H1 (cell line): ENCODE measurements at regions of chr19 and their contacts with region 1.

Region 1: DNA sequence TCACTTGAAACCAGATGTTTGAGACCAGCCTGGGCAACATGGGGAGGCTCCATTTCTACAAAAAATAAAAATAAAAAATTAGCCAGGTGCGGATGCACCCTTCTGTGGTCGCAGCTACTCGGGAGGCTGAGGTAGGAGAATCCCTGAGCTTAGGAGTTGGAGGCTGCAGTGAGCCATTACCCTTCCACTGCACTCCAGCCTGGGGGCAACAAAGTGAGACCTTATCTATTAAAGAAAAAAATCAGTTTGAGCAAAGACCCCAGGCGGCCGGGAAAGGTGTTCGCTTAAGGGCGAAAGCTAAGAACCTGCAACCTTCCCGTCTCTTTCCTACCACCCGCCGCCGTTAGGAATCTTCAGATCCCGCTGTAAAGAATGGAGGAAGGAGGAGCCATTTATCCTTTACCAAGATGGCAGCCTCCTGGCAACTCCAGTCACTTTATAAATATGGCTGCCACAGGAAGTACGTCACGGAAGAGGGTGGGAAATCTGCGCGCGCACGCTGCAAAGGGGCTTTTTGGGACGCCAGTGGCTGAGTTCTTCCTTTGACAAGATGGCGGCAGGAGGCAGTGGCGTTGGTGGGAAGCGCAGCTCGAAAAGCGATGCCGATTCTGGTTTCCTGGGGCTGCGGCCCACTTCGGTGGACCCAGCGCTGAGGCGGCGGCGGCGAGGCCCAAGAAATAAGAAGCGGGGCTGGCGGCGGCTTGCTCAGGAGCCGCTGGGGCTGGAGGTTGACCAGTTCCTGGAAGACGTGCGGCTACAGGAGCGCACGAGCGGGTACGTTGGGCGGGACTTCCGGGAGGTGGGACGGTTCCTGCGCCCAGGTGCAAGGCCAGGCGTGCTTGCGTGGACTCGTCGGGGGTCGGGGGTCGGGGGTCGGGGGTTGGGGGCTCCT is at the start of gene NOP53:
- DNase-seq: peak; percentile 96 to 98
- H3K4me3 ChIP-seq: peak within 1 kb of the TSS; percentile 66 to 92 (median 80)
- H3K27ac ChIP-seq: peak within 1 kb of the TSS; percentile 97
- H3K4me1 ChIP-seq: peaks cover 0 to 15% (median 4%) of the 10 kb centered on the region in 4 experiments; a peak in 4 of 7 replicates
- H3K27me3 ChIP-seq: no peaks in the 10 kb centered on the region
- CTCF ChIP-seq: no peak
- EP300 ChIP-seq: 0 out of 3 replicates have a peak, but pooled peaks of 1 of the 2 experiments have one; percentile 20
- POLR2A ChIP-seq: peak; percentile 94 to 97
- RAD21 ChIP-seq: no peak
- total RNA-seq, gene NOP53: 245 and 262 TPM in 2 replicates

Region 2: GRCh38 chr19:47707135-47707925 is 37.9 kb before region 1 on chr19:
- CTCF ChIA-PET with region 1: interaction called, 51 read pairs
- POLR2A ChIA-PET with region 1: interaction called, 15 read pairs
- DNase-seq: peak in 1 of 2 experiments; percentile 94
- H3K4me3 ChIP-seq: no peak overlapping the region
- H3K27ac ChIP-seq: no peak overlapping the region
- H3K4me1 ChIP-seq: no peaks in the 10 kb centered on the region
- H3K27me3 ChIP-seq: no peaks in the 10 kb centered on the region
- CTCF ChIP-seq: peak; percentile 91 to 93 (median 92)
- EP300 ChIP-seq: peak in 1 of 2 experiments; percentile 40; a peak in 1 of 3 replicates
- POLR2A ChIP-seq: no peak
- RAD21 ChIP-seq: peak; percentile 90 to 91

Region 3: DNA sequence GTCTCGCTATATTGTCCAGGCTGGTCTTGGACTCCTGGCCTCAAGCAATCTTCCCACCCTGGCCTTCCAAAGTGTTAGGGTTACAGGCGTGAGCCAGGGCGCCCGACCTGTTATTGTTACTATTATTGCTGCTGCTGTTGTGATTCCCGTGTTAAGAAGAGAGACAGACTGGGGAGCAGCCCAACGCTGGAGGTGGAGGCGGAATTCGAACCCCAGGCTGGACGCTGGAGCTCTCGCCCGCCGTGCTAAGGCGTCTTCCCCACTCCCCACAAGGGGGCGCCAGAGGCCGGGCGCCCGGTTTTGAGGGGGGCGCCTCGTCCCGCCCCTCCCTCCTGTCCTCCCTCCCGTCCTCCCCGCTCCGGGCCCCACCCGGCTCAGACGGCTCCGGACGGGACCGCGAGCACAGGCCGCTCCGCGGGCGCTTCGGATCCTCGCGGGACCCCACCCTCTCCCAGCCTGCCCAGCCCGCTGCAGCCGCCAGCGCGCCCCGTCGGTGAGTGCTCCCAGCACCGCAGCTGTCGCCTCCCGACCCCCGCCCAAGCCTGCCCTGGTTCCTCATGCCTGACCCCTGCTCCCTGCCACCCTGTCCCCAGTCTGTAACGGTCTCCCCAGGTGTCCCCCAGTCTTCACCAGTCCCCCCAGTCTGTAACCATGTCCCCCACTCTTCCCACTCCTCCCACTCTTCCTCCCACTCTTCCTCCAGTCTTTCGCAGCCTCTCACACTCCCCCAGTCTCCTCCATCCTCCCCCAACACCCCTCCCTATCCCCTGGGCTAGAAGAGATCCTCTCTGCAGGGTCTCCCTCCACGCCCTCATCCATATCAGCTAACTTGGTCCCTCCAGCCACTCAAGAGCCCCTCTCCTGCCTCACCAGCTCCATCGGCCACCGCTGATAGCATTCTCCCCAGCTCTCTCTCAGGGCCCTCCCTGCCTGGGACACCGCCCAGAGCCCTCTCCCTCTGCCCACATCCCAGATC is 31.9 kb before region 1 on chr19 and contains the start of gene EHD2:
- CTCF ChIA-PET with region 1: interaction called, 51 read pairs
- POLR2A ChIA-PET with region 1: interaction called, 15 read pairs
- DNase-seq: peak in 1 of 2 experiments; percentile 89
- H3K4me3 ChIP-seq: peak within 1 kb of the TSS; percentile 47 to 66 (median 56)
- H3K27ac ChIP-seq: no peak within 1 kb of the TSS
- H3K4me1 ChIP-seq: no peaks in the 10 kb centered on the region
- H3K27me3 ChIP-seq: no peaks in the 10 kb centered on the region
- CTCF ChIP-seq: peak; percentile 74 to 84 (median 81)
- EP300 ChIP-seq: no peak
- POLR2A ChIP-seq: no peak
- RAD21 ChIP-seq: peak; percentile 77 to 81
- total RNA-seq, gene EHD2: 13.0 and 14.3 TPM in 2 replicates

Region 4: DNA sequence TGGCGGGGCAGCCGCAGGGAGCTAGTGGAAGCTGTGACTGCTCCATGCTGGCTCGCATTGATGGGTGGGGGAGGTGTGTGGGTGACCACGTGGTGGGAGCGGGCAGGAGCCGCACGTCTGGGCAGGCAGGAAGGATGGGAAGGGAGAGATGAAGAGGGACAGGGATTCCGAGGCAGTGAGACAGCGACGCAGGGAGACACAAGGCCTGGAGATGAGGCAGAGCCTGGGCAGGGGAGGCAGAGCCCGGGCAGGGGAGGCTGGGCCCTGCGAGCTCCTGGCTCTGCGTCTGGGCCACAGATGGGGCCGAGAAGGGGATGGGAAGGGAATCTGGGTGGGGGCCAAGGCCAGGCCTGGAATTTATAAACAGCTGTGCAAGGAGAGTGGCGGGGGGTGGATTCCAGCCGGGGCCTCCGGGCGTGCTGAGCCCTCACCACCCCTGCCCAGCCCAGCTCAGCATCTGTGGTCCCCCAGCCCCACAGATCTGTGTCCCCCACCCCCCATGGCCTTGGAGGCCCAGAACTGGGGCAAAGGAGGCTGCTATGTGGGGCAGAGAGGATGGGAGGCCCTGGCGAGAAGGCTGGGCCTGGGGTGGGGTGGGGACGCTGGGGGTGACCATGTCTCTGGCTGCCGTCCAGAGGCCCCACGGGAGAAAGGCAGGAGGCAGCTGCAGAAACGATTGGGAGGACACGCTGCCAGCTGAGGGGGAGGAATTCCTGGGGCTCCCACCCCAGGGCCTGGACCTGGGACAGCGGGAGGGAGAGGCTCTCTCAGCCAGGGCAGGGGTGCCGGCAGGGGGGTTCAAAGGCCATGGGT is 26.0 kb before region 1 on chr19:
- CTCF ChIA-PET with region 1: interaction called, 51 read pairs
- POLR2A ChIA-PET with region 1: interaction called, 10 read pairs
- DNase-seq: no peak
- H3K4me3 ChIP-seq: no peak overlapping the region
- H3K27ac ChIP-seq: peak overlapping the region; percentile 36; the same call in 1 of the 2 replicates
- H3K4me1 ChIP-seq: peaks cover 0 to 4% (median 3%) of the 10 kb centered on the region in 4 experiments; a peak in 4 of 7 replicates
- H3K27me3 ChIP-seq: no peaks in the 10 kb centered on the region
- CTCF ChIP-seq: no peak
- EP300 ChIP-seq: no peak
- POLR2A ChIP-seq: no peak
- RAD21 ChIP-seq: no peak

Region 5: GRCh38 chr19:47729992-47730889 is 15.0 kb before region 1 on chr19:
- CTCF ChIA-PET with region 1: interaction called, 4 read pairs
- POLR2A ChIA-PET with region 1: interaction called, 22 read pairs
- DNase-seq: peak in 1 of 2 experiments; percentile 96
- H3K4me3 ChIP-seq: peak overlapping the region; percentile 41 to 73 (median 62)
- H3K27ac ChIP-seq: no peak overlapping the region; the same call in 1 of the 2 replicates
- H3K4me1 ChIP-seq: peaks cover 0 to 9% (median 5%) of the 10 kb centered on the region in 4 experiments; a peak in 2 of 7 replicates
- H3K27me3 ChIP-seq: no peaks in the 10 kb centered on the region
- CTCF ChIP-seq: no peak
- EP300 ChIP-seq: no peak
- POLR2A ChIP-seq: peak in 1 of 2 experiments; percentile 53; a peak in 1 of 3 replicates
- RAD21 ChIP-seq: no peak

Region 6: DNA sequence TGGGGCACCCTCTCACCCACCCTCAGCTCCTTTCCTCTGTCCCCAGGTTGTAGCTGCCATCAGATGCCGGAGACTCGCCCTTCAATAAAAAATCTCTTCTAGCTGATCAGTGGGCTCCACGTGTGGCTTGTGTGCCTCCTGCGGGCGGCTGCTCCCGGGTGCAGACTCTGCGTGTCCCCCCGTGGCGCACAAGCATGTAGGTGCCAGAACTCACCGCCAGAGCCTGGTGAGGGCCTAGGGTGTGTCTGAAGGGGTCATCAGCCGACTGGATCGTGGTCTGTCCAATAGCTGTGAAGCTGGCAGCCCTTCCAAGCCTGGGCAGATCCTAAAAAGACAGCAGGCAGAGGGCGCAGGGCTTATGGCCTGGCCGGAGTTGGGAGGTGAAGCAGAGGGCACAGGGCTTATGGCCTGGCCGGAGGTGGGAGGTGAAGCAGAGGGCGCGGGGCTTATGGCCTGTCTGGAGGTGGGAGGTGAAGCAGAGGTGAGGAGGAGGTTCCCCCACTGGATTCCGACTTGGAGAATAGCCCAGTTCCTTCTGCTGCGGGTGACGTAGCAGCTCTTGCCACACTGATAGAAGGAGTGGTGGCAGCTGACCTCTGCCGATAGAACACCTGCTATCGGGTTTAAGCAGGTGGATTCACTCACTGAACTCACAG is 11.8 kb after region 1 on chr19:
- CTCF ChIA-PET with region 1: interaction called, 10 read pairs
- POLR2A ChIA-PET with region 1: interaction called, 204 read pairs
- DNase-seq: no peak
- H3K4me3 ChIP-seq: no peak overlapping the region
- H3K27ac ChIP-seq: no peak overlapping the region
- H3K4me1 ChIP-seq: no peaks in the 10 kb centered on the region
- H3K27me3 ChIP-seq: no peaks in the 10 kb centered on the region
- CTCF ChIP-seq: no peak
- EP300 ChIP-seq: no peak
- POLR2A ChIP-seq: peak in 1 of 2 experiments; percentile 37; a peak in 2 of 3 replicates
- RAD21 ChIP-seq: no peak

Region 7: GRCh38 chr19:47765523-47766358 is 20.5 kb after region 1 on chr19:
- CTCF ChIA-PET with region 1: interaction called, 17 read pairs
- POLR2A ChIA-PET with region 1: interaction called, 204 read pairs
- DNase-seq: peak in 1 of 2 experiments; percentile 93
- H3K4me3 ChIP-seq: no peak overlapping the region
- H3K27ac ChIP-seq: no peak overlapping the region; the same call in 1 of the 2 replicates
- H3K4me1 ChIP-seq: peaks cover 0 to 6% (median 3%) of the 10 kb centered on the region in 4 experiments; a peak in 5 of 7 replicates
- H3K27me3 ChIP-seq: no peaks in the 10 kb centered on the region
- CTCF ChIP-seq: peak; percentile 85 to 95 (median 94)
- EP300 ChIP-seq: no peak
- POLR2A ChIP-seq: no peak
- RAD21 ChIP-seq: peak; percentile 91 to 93